HCT116 (cell line): ENCODE measurements at regions of chr9 and their contacts with region 1.

Region 1: DNA sequence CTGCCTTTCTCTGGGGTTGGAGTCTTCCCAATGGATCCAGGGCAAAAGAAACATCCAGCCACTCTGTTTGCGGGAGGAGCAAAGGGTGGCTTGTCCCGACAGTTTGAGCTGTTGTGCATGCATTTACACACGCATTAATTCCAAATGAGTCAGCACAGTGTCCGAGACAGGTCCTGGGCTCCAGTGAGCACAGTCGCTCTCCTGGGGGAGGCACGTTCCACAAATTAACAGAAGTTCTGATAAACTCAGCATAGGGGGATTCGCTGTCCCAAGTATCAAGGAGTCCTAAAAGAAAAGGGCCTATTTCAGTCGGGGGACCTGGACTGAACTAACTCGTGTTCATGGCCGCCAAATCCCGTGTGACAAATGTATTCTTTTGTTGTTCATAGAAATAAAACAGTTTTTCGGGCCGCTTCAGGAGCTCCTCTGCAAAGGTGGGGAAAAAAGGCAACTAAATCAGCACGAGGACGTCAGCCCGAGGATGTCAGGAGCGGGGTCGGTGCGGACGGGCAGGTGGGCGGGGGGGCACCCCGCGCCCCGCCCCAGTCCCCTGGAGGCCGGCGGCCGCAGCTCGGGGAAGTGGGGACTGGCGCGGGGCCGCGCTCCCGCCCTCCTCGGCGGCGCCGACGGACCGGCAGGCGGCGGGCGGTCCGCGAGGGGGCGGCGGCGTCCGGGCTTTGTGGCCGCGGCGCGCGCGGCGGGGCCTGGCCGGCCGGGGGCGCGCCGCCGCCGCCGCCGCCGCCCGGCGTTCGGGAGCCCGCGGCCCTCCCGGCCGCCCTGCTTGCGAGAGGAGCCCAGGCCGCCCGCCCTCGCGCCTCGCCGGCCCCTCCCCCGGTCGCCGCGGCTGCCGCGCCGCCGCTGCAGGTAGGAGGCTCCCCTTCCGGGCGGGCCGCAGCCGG is at the start of gene MSANTD3:
- DNase-seq: peak; percentile 50
- ATAC-seq: peak; percentile 71
- H3K4me3 ChIP-seq: peak within 1 kb of the TSS; percentile 62 to 73
- H3K27ac ChIP-seq: peak within 1 kb of the TSS; percentile 73
- H3K4me1 ChIP-seq: peaks cover 33 to 44% of the 10 kb centered on the region in 2 experiments
- H3K27me3 ChIP-seq: no peaks in the 10 kb centered on the region
- CTCF ChIP-seq: no peak
- POLR2A ChIP-seq: peak; percentile 44
- RAD21 ChIP-seq: no peak
- total RNA-seq, gene MSANTD3: 31.3 TPM

Region 2: DNA sequence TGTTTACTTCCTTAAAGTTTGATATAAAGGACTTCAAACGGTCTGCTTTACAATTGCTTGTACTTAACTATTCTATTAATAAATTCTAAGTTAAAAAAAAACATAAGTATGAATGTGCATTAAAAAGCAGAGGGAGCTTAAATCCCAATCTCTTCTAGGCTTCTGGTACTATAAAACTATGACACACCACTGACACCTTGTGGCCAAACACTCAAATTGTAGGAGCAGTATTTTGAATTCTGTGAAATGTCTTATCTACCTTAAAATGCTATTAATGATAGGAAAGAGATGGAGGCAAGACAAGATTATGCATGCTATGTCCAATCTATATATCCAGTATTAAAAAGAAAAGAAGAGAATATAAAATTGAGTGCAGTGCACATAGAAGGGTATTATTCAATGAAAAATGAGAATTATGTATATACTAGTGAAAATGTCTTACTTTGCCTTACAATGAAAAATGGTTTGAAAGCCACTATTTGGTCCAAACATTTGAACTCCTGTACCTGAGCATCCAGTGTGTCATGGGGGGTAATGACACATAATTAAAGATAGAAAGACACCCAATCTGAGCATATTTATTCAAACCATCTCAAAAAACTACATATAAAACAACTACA is 415.6 kb before region 1 on chr9:
- CTCF ChIA-PET with region 1: no interaction called
- POLR2A ChIA-PET with region 1: no interaction called
- RAD21 ChIA-PET with region 1: no interaction called
- intact Hi-C with region 1: no loop called
- DNase-seq: peak; percentile 59
- ATAC-seq: peak; percentile 54
- H3K4me3 ChIP-seq: no peak overlapping the region
- H3K27ac ChIP-seq: no peak overlapping the region
- H3K4me1 ChIP-seq: no peaks in the 10 kb centered on the region
- H3K27me3 ChIP-seq: no peaks in the 10 kb centered on the region
- CTCF ChIP-seq: peak; percentile 54 to 75 (median 58); a peak in 5 of 6 replicates
- POLR2A ChIP-seq: no peak
- RAD21 ChIP-seq: peak; percentile 79

Region 3: DNA sequence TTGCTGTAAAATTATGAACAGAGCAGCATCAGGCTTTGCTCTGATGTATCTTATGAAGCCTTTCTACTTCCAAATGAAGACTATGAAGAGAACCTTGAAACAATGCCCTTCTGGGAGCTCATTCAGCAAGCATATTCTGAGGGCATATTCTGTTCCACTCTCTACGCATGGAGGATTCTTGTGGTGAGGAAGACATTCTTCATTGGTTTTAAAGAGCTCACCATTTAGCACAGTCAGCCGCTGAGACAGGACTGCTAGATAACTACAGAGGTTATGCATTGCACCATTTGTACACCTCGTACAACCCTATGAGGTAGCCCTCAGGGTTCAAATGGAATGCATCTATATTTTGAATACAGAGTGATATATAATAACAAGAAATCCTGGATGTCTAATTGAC is 266.8 kb before region 1 on chr9:
- CTCF ChIA-PET with region 1: no interaction called
- POLR2A ChIA-PET with region 1: no interaction called
- RAD21 ChIA-PET with region 1: no interaction called
- intact Hi-C with region 1: no loop called
- DNase-seq: no peak
- ATAC-seq: no peak
- H3K4me3 ChIP-seq: no peak overlapping the region
- H3K27ac ChIP-seq: no peak overlapping the region
- H3K4me1 ChIP-seq: no peaks in the 10 kb centered on the region
- H3K27me3 ChIP-seq: no peaks in the 10 kb centered on the region
- CTCF ChIP-seq: no peak
- POLR2A ChIP-seq: no peak
- RAD21 ChIP-seq: no peak

Region 4: DNA sequence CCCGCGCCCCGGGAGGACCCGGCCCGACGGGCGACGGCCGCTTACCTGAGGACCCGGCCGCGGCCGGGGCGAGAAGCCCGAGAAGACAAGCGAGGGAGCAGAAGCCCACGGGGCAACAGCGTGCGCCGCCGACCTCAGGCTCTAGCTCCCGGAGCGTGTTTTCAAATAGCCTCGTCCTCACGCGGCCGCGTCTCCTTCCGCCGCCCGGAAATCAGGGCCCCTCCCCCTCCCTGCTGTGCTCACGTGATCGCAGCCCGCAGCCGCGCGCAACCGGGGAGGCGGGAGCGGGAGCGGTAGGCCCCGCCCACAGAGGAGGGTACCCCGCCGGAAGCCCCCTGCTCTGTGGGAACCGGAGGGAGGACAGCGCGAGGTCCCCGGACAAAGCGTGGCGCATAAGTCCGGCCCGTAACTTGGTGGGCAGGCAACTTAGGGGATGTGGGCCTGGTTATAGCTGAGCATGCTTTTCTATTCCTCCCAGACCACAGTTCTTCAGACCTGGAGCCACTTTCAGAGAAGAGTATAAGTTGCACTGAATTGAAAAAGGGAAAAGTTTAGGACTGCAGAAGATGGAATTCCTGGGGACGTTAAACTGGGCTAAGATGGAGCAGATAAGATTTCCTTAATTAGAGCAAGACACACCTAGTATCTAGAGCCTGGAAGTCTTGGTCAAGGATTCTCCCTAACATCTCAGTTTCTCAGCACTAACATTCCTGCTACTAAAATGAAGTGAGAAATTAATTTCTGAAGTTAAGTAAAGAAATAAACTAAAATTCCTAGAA is 73.9 kb before region 1 on chr9 and contains the start of gene TEX10:
- CTCF ChIA-PET with region 1: no interaction called
- POLR2A ChIA-PET with region 1: no interaction called
- RAD21 ChIA-PET with region 1: no interaction called
- intact Hi-C with region 1: loop called (anchors 2 kb)
- DNase-seq: peak; percentile 59
- ATAC-seq: peak; percentile 86
- H3K4me3 ChIP-seq: peak within 1 kb of the TSS; percentile 88 to 91
- H3K27ac ChIP-seq: peak within 1 kb of the TSS; percentile 88
- H3K4me1 ChIP-seq: peaks cover 0 to 26% of the 10 kb centered on the region in 2 experiments; a peak in 2 of 4 replicates
- H3K27me3 ChIP-seq: no peaks in the 10 kb centered on the region
- CTCF ChIP-seq: no peak
- POLR2A ChIP-seq: no peak
- RAD21 ChIP-seq: no peak
- total RNA-seq, gene TEX10: 53.0 TPM

Region 5: GRCh38 chr9:100561256-100561655 is 134.5 kb after region 1 on chr9:
- CTCF ChIA-PET with region 1: no interaction called
- POLR2A ChIA-PET with region 1: no interaction called
- RAD21 ChIA-PET with region 1: no interaction called
- intact Hi-C with region 1: no loop called
- DNase-seq: no peak
- ATAC-seq: no peak
- H3K4me3 ChIP-seq: no peak overlapping the region
- H3K27ac ChIP-seq: no peak overlapping the region
- H3K4me1 ChIP-seq: no peaks in the 10 kb centered on the region
- H3K27me3 ChIP-seq: no peaks in the 10 kb centered on the region
- CTCF ChIP-seq: no peak
- POLR2A ChIP-seq: no peak
- RAD21 ChIP-seq: no peak